ENCODE measurements at regions of chr18 and their contacts with region 1.

Region 1: DNA sequence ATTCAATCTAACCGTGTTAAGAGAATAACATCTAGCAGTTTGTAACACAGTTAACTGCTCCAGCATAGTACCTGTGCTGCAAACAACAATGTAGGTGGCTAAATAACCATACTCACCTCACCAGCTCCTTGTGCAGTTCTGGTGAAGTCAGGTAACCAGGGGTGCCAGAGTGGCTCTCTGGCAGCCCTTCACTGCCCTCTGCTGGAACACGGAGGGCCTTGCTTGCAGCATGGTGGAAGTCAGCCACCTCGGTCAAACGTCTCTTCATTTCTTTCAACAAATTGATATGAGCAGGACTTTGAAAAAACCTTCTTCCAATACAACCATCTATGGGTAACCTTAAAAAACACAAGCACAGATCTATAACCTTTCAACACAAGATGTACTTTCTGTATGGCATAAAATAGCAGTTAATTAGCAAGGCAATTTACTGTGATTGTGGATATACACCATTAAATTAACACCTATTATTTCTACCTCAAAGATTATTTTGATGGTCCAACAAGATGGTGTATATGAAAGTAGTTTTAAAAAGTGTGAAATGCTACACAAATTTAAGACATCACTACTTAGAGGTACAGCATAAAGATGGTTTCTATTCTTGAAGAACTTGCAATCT is 56.6 kb downstream of the EPG5 start:
- DNase-seq: peak; percentile 36
- ATAC-seq: peak; percentile 98
- H3K4me3 ChIP-seq: no peak overlapping the region
- H3K27ac ChIP-seq: no peak overlapping the region
- H3K4me1 ChIP-seq: no peaks in the 10 kb centered on the region
- H3K27me3 ChIP-seq: no peaks in the 10 kb centered on the region
- CTCF ChIP-seq: peak; percentile 65 to 96 (median 91)
- POLR2A ChIP-seq: no peak
- RAD21 ChIP-seq: peak; percentile 76

Region 2: DNA sequence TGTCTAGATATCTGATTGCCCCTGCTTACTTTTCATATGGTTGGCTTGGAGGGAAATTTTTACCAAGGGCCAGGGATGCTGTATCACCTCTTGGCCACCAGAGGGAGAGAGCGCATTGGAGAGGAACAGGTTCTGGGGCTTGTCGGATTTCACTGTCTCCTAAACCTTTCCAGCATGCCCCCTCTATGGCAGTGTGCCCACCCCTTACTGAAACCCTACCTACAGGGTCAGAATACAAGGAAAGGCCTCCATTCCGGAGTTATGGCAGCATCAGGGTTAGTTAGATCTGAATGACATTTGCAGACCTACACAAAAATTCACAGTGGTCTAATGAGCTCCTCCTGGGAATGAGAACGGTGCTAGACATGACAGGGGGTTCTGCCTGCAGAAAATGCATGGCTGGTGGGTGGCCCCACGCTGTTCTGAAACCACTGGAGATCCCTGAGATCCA is 289.4 kb before region 1 on chr18:
- CTCF ChIA-PET with region 1: no interaction called
- POLR2A ChIA-PET with region 1: no interaction called
- RAD21 ChIA-PET with region 1: no interaction called
- intact Hi-C with region 1: loop called (anchors 1 kb)
- DNase-seq: peak; percentile 28
- ATAC-seq: peak; percentile 67
- H3K4me3 ChIP-seq: no peak overlapping the region
- H3K27ac ChIP-seq: no peak overlapping the region
- H3K4me1 ChIP-seq: peaks cover 7 to 15% of the 10 kb centered on the region in 2 experiments
- H3K27me3 ChIP-seq: peaks cover 33% of the 10 kb centered on the region
- CTCF ChIP-seq: peak; percentile 48 to 97 (median 95); a peak in 5 of 6 replicates
- POLR2A ChIP-seq: no peak
- RAD21 ChIP-seq: peak; percentile 59

Region 3: GRCh38 chr18:45690975-45691815 is 219.3 kb before region 1 on chr18:
- CTCF ChIA-PET with region 1: interaction called, 4 read pairs
- POLR2A ChIA-PET with region 1: no interaction called
- RAD21 ChIA-PET with region 1: no interaction called
- intact Hi-C with region 1: loop called (anchors 1 kb)
- DNase-seq: peak; percentile 62
- ATAC-seq: peak; percentile 98
- H3K4me3 ChIP-seq: no peak overlapping the region
- H3K27ac ChIP-seq: no peak overlapping the region
- H3K4me1 ChIP-seq: peaks cover 0 to 5% of the 10 kb centered on the region in 2 experiments; a peak in 1 of 4 replicates
- H3K27me3 ChIP-seq: no peaks in the 10 kb centered on the region
- CTCF ChIP-seq: peak; percentile 79 to 91 (median 84)
- POLR2A ChIP-seq: no peak
- RAD21 ChIP-seq: peak; percentile 93

Region 4: DNA sequence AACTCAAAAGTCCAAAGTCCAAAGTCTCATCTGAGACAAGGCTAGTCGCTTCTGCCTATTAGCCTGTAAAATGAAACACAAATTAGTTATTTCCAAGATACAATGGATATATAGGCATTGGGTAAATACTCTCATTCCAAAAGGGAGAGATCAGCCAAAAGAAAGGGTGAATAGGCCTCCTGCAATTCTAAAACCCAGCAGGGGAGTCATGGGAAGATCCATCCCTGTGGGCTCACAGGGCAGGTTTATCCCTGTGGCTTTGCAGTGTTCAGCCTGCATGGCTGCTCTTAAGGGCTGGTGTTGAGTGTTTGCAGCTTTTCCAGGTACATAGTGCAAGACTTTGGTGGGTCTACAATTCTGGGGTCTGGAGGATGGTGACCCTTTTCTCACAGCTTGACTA is 207.6 kb before region 1 on chr18:
- CTCF ChIA-PET with region 1: no interaction called
- POLR2A ChIA-PET with region 1: no interaction called
- RAD21 ChIA-PET with region 1: no interaction called
- intact Hi-C with region 1: no loop called
- DNase-seq: no peak
- ATAC-seq: no peak
- H3K4me3 ChIP-seq: no peak overlapping the region
- H3K27ac ChIP-seq: no peak overlapping the region
- H3K4me1 ChIP-seq: no peaks in the 10 kb centered on the region
- H3K27me3 ChIP-seq: no peaks in the 10 kb centered on the region; the same call in 1 of the 2 replicates
- CTCF ChIP-seq: no peak
- POLR2A ChIP-seq: no peak
- RAD21 ChIP-seq: no peak

Region 5: DNA sequence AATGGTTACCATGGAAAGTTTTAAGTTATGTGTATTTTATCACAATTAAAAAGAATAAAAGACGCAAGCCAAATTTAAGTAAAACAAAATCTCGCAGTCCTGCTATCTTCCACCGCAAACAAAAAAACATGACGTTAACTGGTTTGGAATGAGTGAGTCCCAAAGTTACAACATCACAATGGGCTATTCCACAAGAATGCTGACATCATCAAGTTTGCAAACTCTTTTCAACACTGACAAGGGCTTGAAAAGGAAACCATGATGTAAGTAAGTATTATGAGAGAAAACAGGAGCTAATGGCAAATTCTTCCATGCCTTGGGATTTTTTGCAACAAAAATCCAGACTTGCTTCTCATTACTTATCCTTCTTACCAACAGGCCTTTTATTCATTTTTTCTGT is 54.0 kb before region 1 on chr18:
- CTCF ChIA-PET with region 1: no interaction called
- POLR2A ChIA-PET with region 1: no interaction called
- RAD21 ChIA-PET with region 1: no interaction called
- intact Hi-C with region 1: loop called (anchors 5 kb)
- DNase-seq: no peak
- ATAC-seq: no peak
- H3K4me3 ChIP-seq: no peak overlapping the region
- H3K27ac ChIP-seq: no peak overlapping the region
- H3K4me1 ChIP-seq: no peaks in the 10 kb centered on the region
- H3K27me3 ChIP-seq: no peaks in the 10 kb centered on the region
- CTCF ChIP-seq: no peak
- POLR2A ChIP-seq: no peak
- RAD21 ChIP-seq: no peak

Region 6: DNA sequence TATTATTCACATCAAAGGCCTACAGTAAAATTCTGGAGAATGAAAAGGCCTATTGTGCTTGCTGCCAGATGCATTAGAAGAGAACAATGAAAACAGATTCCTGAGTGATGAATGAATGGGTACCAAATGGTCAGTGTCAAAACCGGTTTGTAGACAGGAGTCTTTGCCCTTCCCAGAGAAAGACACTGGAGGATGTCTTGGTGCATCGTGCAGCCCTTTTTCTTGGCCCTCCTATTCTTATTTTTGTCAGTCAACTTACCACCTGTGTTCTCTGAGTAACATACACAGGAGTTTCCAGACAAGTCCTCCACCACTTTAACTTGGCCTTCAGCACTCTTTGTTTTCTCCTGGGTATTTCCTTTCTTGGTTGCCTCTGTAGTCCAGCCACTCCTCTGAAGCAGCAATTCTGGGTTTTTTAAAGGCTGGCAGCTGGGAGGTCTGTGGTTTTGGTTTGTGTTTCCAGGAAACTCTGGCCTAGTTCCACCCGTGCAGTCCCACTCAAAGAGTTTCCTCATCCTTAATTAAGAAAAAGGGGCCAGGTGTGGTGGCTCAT is 132.1 kb after region 1 on chr18:
- CTCF ChIA-PET with region 1: no interaction called
- POLR2A ChIA-PET with region 1: no interaction called
- RAD21 ChIA-PET with region 1: no interaction called
- intact Hi-C with region 1: no loop called
- DNase-seq: no peak
- ATAC-seq: peak; percentile 72
- H3K4me3 ChIP-seq: no peak overlapping the region
- H3K27ac ChIP-seq: no peak overlapping the region
- H3K4me1 ChIP-seq: peaks cover 5 to 16% of the 10 kb centered on the region in 2 experiments; a peak in 3 of 4 replicates
- H3K27me3 ChIP-seq: no peaks in the 10 kb centered on the region
- CTCF ChIP-seq: no peak
- POLR2A ChIP-seq: no peak
- RAD21 ChIP-seq: no peak

Region 7: GRCh38 chr18:46110406-46110805 is 199.9 kb after region 1 on chr18:
- CTCF ChIA-PET with region 1: no interaction called
- POLR2A ChIA-PET with region 1: no interaction called
- RAD21 ChIA-PET with region 1: no interaction called
- intact Hi-C with region 1: no loop called
- DNase-seq: no peak
- ATAC-seq: peak; percentile 67
- H3K4me3 ChIP-seq: no peak overlapping the region
- H3K27ac ChIP-seq: peak overlapping the region; percentile 18; the same call in 1 of the 2 replicates
- H3K4me1 ChIP-seq: peaks cover 13 to 20% of the 10 kb centered on the region in 2 experiments
- H3K27me3 ChIP-seq: no peaks in the 10 kb centered on the region
- CTCF ChIP-seq: no peak
- POLR2A ChIP-seq: no peak
- RAD21 ChIP-seq: no peak

Region 8: DNA sequence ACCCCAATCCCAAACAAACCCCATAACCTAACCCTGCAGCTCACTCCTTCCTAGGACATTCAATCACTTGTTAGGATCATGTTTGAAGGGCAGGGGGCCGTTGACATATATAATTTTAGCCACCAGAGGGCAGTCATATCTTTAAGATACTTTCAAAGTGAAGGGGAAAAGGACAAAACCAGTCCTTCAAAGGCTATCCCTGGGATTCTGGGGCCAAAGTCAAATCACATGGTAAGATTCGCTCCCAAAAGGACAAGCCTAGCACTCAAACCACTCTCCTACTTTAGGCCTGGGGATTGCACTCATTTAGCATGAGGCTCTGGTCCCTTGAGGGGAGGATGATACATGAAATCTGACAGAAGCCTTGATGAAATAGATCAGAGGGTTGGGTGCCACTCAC is 238.3 kb after region 1 on chr18:
- CTCF ChIA-PET with region 1: no interaction called
- POLR2A ChIA-PET with region 1: no interaction called
- RAD21 ChIA-PET with region 1: no interaction called
- intact Hi-C with region 1: no loop called
- DNase-seq: no peak
- ATAC-seq: peak; percentile 65
- H3K4me3 ChIP-seq: no peak overlapping the region
- H3K27ac ChIP-seq: no peak overlapping the region
- H3K4me1 ChIP-seq: peaks cover 20 to 28% of the 10 kb centered on the region in 2 experiments
- H3K27me3 ChIP-seq: no peaks in the 10 kb centered on the region
- CTCF ChIP-seq: peak; percentile 57 to 85 (median 78)
- POLR2A ChIP-seq: no peak
- RAD21 ChIP-seq: peak; percentile 85